ENCODE measurements at regions of chr4 and their contacts with region 1.

Region 1: DNA sequence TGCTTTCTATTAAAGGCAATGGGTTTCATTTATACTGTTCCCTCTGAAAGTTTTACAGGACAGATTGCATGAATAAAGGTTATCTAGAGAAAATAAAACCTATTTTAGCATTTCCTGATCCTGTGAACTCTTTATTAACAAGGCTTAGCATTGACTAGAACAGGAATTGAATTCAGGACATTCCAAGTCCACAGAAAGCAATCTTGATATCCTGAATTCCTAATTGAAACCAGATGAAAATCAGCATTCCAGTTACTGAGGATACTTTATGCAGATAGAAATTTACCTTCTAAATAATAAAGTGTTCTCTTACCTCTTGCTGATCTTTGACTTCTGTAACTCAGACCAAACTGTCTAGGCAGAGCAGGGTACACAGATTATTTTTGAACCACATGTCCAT is 151.4 kb downstream of the ZNF518B start:
- DNase-seq: no peak
- ATAC-seq: peak in 1 of 8 donors; percentile 14
- H3K4me3 ChIP-seq: no peak overlapping the region
- H3K27ac ChIP-seq: no peak overlapping the region
- H3K4me1 ChIP-seq: no peaks in the 10 kb centered on the region
- H3K27me3 ChIP-seq: peaks cover 0 to 9% (median 0%) of the 10 kb centered on the region in 7 donors
- CTCF ChIP-seq: no peak

Region 2: DNA sequence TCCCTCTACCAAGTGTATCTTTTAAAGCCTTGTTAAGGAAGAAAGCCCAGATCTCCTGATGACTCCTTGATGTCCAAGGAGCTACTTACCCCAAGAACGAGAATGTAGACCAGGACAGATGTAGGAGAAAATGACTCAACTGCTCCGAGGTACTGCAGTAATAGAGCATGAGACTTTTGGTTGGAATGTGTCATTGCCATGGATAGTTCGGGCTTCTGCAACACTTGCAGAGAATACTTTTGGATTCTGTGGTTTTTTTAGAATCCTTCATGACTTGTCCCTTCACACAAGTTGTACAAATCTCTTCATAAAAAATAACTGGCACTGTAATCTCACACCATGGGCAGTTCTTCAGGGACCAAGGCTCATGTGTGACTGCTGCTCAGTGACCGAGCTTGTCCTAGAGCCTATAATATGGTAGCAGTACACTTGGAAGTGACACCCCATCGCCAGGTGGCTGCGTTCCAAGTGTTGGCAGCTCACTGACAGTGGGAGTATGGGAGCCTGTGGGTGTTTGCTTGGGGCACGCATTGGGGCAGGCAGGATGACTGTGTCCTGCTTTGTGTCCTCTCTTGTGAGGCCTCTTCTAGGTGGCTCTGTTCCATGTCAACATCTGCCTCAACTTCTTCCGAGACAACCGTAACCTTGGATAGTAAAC is 101.3 kb before region 1 on chr4:
- intact Hi-C with region 1: no loop called
- DNase-seq: peak; percentile 10 to 52
- ATAC-seq: peak in 5 of 8 donors; percentile 27 to 68 (median 49)
- H3K4me3 ChIP-seq: no peak overlapping the region
- H3K27ac ChIP-seq: no peak overlapping the region
- H3K4me1 ChIP-seq: no peaks in the 10 kb centered on the region
- H3K27me3 ChIP-seq: no peaks in the 10 kb centered on the region
- CTCF ChIP-seq: no peak

Region 3: GRCh38 chr4:10283761-10284160 is 22.1 kb before region 1 on chr4:
- intact Hi-C with region 1: loop called in 1 of 10 experiments (anchors 1 kb)
- DNase-seq: no peak
- ATAC-seq: no peak
- H3K4me3 ChIP-seq: no peak overlapping the region
- H3K27ac ChIP-seq: no peak overlapping the region
- H3K4me1 ChIP-seq: no peaks in the 10 kb centered on the region
- H3K27me3 ChIP-seq: no peaks in the 10 kb centered on the region
- CTCF ChIP-seq: no peak

Region 4: DNA sequence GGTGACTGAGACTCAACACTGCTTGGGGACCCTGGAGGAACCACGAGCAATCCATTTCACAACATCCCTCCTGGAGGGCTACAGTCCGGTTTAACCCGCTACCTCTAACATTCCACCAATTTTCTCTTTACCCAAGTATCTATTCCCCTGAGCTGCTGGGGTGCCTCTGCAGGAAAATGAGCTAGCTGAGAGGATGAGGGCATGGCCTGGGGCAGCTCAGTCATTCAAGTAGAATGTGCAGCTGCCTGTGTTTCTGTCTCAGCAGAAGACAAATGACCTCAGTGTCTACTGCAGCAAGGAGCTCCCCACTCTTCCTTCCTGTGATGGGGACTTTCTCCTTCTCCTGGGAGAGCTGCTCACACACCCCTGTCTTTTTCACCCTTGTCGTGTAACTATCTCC is 30.7 kb after region 1 on chr4:
- intact Hi-C with region 1: loop called in 1 of 10 experiments (anchors 1 kb)
- DNase-seq: no peak
- ATAC-seq: no peak
- H3K4me3 ChIP-seq: no peak overlapping the region
- H3K27ac ChIP-seq: no peak overlapping the region
- H3K4me1 ChIP-seq: no peaks in the 10 kb centered on the region
- H3K27me3 ChIP-seq: peaks cover 0 to 9% (median 4%) of the 10 kb centered on the region in 7 donors
- CTCF ChIP-seq: no peak